Cardiac septum (tissue), 1 donor: ENCODE measurements at regions of chr1 and their contacts with region 1.

Region 1: GRCh38 chr1:228004331-228004855 is 2.4 kb upstream of the WNT3A start:
- DNase-seq: peak; percentile 65

Region 2: GRCh38 chr1:228050571-228051231 is 46.3 kb after region 1 on chr1:
- intact Hi-C with region 1: no loop called
- DNase-seq: no peak

Region 3: DNA sequence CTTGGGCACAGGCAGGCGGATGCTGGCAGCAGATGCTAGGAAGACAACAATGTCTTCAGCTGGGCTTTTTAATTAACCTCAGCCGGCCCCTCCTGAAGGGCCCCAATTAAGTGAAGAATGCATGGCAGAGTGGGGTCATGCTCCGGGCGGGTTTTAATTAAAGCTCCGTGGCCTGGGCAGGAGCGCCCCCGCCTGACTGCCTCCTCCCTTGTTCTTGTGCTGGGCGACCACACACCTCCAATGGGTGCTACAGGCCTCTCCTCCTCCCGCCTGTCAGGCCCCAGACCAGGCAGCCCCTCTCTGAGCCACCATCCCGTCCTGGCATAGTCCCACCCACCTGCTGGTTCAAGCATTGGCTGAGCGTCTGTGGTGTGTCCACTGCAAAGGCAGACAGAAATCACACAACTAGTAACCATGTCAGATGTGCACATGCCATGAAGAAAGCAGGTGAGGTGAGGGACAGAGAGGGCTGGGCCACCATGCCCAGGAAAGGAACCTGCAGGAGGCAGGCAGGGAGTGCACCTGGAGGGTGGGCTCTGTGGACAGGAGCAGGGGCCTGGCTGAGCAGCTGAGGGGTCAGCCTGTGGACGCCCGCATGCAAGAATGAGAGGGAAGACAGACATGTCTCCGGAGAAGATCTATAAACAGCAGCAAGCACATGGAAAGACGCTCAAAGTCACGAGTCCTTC is 69.6 kb after region 1 on chr1:
- intact Hi-C with region 1: loop called (anchors 5 kb)
- DNase-seq: no peak

Region 4: DNA sequence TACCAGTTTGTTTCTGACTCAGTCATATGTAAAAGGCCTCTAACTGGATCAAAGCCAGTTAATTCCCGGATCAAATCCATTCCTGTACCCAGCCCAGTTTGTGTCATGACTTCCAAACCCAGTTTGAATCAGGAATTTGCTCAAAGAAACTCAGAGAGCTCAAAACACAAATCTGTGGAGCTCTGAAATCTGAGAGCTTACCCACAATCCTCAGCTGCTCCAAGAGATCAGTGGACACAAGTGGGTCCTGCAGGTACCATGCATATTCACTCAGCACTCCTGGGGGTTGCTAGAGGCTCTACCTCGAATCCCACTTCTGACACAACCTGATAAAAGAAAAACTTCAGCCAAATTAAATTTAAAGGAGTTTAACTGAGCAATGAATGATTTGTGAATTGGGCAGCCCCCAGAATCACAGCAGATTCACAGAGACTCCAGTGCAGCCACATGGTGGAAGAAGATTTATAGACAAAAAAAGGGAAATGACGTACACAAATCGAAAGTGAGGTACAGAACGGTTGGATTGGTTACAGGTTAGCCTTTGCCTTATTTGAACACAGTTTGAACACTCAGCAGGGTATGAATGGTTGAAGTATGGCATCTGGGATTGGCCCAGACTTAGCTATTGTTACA is 116.6 kb after region 1 on chr1:
- intact Hi-C with region 1: loop called (anchors 10 kb)
- DNase-seq: no peak